Mammary epithelial cell (primary cell): ENCODE measurements at regions of chr7 and their contacts with region 1.

Region 1: GRCh38 chr7:11427686-11428273 is 404.2 kb downstream of the THSD7A start:
- DNase-seq: peak; percentile 38
- H3K4me3 ChIP-seq: no peak overlapping the region
- H3K27ac ChIP-seq: no peak overlapping the region
- H3K4me1 ChIP-seq: no peaks in the 10 kb centered on the region
- H3K27me3 ChIP-seq: peaks cover 4% of the 10 kb centered on the region
- CTCF ChIP-seq: peak; percentile 64 to 73

Region 2: DNA sequence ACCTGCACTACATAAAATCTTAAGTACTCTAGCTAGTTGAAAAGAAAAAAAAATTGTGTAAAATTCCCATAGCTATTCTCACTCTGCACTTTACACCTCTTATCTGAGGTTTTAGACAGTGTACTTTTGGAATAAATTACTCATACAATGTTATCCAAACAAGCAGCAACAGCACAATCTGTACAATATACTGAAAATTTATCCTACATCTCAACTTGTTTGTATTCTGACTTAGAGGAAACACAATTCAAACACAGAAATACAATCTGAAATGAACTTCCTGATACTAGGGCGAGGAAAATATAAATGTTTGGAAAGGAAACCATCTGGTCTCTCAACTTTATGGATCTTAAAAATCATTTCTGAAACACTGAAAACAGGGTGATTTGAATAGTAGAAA is 22.5 kb after region 1 on chr7:
- CTCF ChIA-PET with region 1: no interaction called
- dilution Hi-C with region 1: no loop called
- in situ Hi-C with region 1: no loop called
- intact Hi-C with region 1: no loop called
- DNase-seq: no peak
- H3K4me3 ChIP-seq: no peak overlapping the region
- H3K27ac ChIP-seq: no peak overlapping the region
- H3K4me1 ChIP-seq: no peaks in the 10 kb centered on the region
- H3K27me3 ChIP-seq: no peaks in the 10 kb centered on the region
- CTCF ChIP-seq: no peak

Region 3: GRCh38 chr7:11557627-11558026 is 129.8 kb after region 1 on chr7:
- CTCF ChIA-PET with region 1: no interaction called
- dilution Hi-C with region 1: no loop called
- in situ Hi-C with region 1: no loop called
- intact Hi-C with region 1: loop called (anchors 1 kb)
- DNase-seq: peak; percentile 30
- H3K4me3 ChIP-seq: no peak overlapping the region
- H3K27ac ChIP-seq: no peak overlapping the region
- H3K4me1 ChIP-seq: no peaks in the 10 kb centered on the region
- H3K27me3 ChIP-seq: peaks cover 4% of the 10 kb centered on the region
- CTCF ChIP-seq: peak; percentile 30 to 61

Region 4: DNA sequence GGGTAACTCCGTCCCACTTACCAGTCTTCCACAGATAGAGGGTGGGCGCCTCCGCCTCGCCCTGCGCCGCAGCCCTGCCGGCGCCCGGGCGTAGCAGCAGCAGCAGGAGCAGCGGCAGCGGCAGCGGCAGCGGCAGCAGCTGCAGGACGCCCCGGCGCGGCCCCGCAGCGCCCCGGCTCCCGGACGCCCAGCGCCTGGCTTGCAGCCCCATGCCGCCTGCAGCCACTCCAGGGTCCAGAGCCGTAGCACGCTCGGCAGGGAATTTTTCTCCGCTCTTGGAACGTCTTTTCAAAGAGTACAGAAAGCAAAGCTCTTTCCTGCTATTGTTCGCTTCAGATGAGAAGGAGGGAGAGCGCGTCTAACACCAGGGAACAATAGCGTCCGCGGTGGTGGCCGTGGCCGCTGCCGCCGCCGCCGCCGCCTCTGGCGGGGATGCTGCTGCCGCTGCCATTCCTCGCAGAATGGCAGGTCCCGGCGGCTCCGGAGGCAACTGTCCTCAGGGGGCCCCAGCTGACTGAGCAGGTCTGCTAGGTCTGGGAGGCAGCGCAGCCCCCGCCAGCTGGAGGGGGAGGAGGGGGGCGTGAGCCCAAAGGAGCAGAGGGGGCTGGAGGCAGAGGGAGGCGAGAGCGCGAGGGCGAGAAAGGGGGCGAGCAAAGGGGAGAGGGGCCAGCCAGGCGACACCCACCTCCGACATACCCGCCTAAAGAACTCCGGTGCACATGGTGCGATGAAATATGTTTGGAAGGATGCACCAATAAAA is 404.1 kb after region 1 on chr7 and contains the start of gene THSD7A:
- CTCF ChIA-PET with region 1: no interaction called
- dilution Hi-C with region 1: no loop called
- in situ Hi-C with region 1: no loop called
- intact Hi-C with region 1: loop called (anchors 5 kb)
- DNase-seq: peak; percentile 17
- H3K4me3 ChIP-seq: peak within 1 kb of the TSS; percentile 30 to 46 (median 41)
- H3K27ac ChIP-seq: no peak within 1 kb of the TSS
- H3K4me1 ChIP-seq: peaks cover 14% of the 10 kb centered on the region
- H3K27me3 ChIP-seq: peaks cover 23% of the 10 kb centered on the region
- CTCF ChIP-seq: no peak
- total RNA-seq, gene THSD7A: not detected